ENCODE measurements at regions of chr6 and their contacts with region 1.

Region 1: GRCh38 chr6:29964887-29965562 is 22.7 kb downstream of the HLA-A start:
- DNase-seq: peak; percentile 89
- ATAC-seq: peak; percentile 93
- H3K4me3 ChIP-seq: peak overlapping the region in 4 of 5 experiments; percentile 38 to 65 (median 46)
- H3K4me3 Mint-ChIP-seq: peak overlapping the region; percentile 86
- H3K27ac ChIP-seq: peak overlapping the region; percentile 47 to 66
- H3K27ac Mint-ChIP-seq: peak overlapping the region; percentile 90
- H3K4me1 ChIP-seq: peaks cover 25 to 30% of the 10 kb centered on the region in 2 donors
- H3K4me1 Mint-ChIP-seq: peaks cover 41% of the 10 kb centered on the region
- H3K27me3 ChIP-seq: no peaks in the 10 kb centered on the region
- H3K27me3 Mint-ChIP-seq: no peaks in the 10 kb centered on the region
- CTCF ChIP-seq: no peak

Region 2: GRCh38 chr6:29847871-29848630 is 117.0 kb before region 1 on chr6:
- CTCF ChIA-PET with region 1: interaction called, 91 read pairs
- POLR2A ChIA-PET with region 1: no interaction called
- intact Hi-C with region 1: loop called (anchors 1 kb)
- DNase-seq: peak; percentile 85
- ATAC-seq: peak; percentile 85
- H3K4me3 ChIP-seq: no peak overlapping the region
- H3K4me3 Mint-ChIP-seq: no peak overlapping the region
- H3K27ac ChIP-seq: no peak overlapping the region
- H3K27ac Mint-ChIP-seq: no peak overlapping the region
- H3K4me1 ChIP-seq: peaks cover 6 to 11% of the 10 kb centered on the region in 2 donors
- H3K4me1 Mint-ChIP-seq: peaks cover 9% of the 10 kb centered on the region
- H3K27me3 ChIP-seq: peaks cover 0 to 63% (median 45%) of the 10 kb centered on the region in 4 experiments
- H3K27me3 Mint-ChIP-seq: peaks cover 66% of the 10 kb centered on the region
- CTCF ChIP-seq: peak; percentile 92

Region 3: GRCh38 chr6:29942275-29943052 is 22.6 kb before region 1 on chr6 and contains the start of gene HLA-A:
- CTCF ChIA-PET with region 1: interaction called, 6 read pairs
- POLR2A ChIA-PET with region 1: interaction called, 13 read pairs
- intact Hi-C with region 1: loop called (anchors 1 kb)
- DNase-seq: peak; percentile 97
- ATAC-seq: peak; percentile 90
- H3K4me3 ChIP-seq: peak within 1 kb of the TSS; percentile 63 to 97 (median 90)
- H3K4me3 Mint-ChIP-seq: peak within 1 kb of the TSS; percentile 99
- H3K27ac ChIP-seq: peak within 1 kb of the TSS; percentile 100
- H3K27ac Mint-ChIP-seq: peak within 1 kb of the TSS; percentile 100
- H3K4me1 ChIP-seq: peaks cover 39 to 50% of the 10 kb centered on the region in 2 donors
- H3K4me1 Mint-ChIP-seq: peaks cover 62% of the 10 kb centered on the region
- H3K27me3 ChIP-seq: no peaks in the 10 kb centered on the region
- H3K27me3 Mint-ChIP-seq: no peaks in the 10 kb centered on the region
- CTCF ChIP-seq: no peak
- total RNA-seq, gene HLA-A: 1,591 and 1,607 TPM in 2 replicates

Region 4: GRCh38 chr6:30006170-30007131 is 41.4 kb after region 1 on chr6:
- CTCF ChIA-PET with region 1: interaction called, 3 read pairs
- POLR2A ChIA-PET with region 1: no interaction called
- intact Hi-C with region 1: loop called (anchors 5 kb)
- DNase-seq: peak; percentile 53
- ATAC-seq: peak; percentile 51
- H3K4me3 ChIP-seq: peak overlapping the region; percentile 15 to 69 (median 59)
- H3K4me3 Mint-ChIP-seq: peak overlapping the region; percentile 82
- H3K27ac ChIP-seq: peak overlapping the region in 1 of 2 donors; percentile 49
- H3K27ac Mint-ChIP-seq: no peak overlapping the region
- H3K4me1 ChIP-seq: peaks cover 19 to 20% of the 10 kb centered on the region in 2 donors
- H3K4me1 Mint-ChIP-seq: peaks cover 18% of the 10 kb centered on the region
- H3K27me3 ChIP-seq: peaks cover 0 to 37% (median 20%) of the 10 kb centered on the region in 4 experiments
- H3K27me3 Mint-ChIP-seq: peaks cover 21% of the 10 kb centered on the region
- CTCF ChIP-seq: no peak

Region 5: DNA sequence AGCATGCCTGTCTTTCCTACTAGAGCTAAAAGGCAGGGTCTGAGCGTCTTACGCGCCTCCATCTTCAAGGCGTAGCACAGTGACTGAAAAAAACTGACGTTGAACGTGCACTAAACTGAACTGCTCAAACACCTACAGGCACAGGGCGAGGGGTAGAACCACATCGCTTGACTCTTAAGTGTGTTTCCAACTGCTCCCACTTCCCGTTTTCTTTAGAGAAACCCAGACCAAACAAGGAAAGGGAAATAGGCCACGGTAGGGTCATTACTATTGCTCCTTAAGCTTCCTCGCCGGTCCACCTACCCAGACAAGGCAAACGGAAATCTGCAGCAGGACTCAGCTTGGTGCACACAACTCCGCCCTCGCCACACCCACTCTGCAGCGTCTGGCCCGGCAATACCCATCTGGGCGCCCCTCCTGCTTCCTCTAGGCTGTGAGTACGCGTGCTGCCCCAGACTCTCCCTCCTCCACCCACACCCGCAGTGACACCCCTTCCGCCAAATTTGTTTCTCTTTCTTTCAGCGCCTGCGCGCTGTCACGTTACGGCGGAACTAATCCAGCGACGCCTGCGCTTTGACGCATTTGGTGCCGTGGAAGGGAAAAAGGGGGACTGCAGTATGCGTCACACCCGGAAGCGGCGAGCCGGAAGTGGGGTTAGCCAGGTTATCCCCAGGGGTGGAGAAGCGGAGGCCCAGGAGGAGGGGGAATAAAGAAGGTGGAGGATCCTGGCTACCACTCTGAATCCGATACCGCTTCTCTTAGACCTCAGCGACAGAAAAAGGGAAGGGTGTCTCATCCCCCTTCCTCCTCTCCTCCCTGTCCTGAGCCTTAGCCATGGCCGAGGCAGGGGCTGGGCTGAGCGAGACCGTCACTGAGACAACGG is 101.8 kb after region 1 on chr6 and contains the start of gene PPP1R11:
- CTCF ChIA-PET with region 1: no interaction called
- POLR2A ChIA-PET with region 1: interaction called, 4 read pairs
- intact Hi-C with region 1: loop called (anchors 2 kb)
- DNase-seq: peak; percentile 100
- ATAC-seq: peak; percentile 97
- H3K4me3 ChIP-seq: peak within 1 kb of the TSS; percentile 80 to 95 (median 85)
- H3K4me3 Mint-ChIP-seq: peak within 1 kb of the TSS; percentile 93
- H3K27ac ChIP-seq: peak within 1 kb of the TSS; percentile 93 to 97
- H3K27ac Mint-ChIP-seq: peak within 1 kb of the TSS; percentile 99
- H3K4me1 ChIP-seq: peaks cover 42 to 45% of the 10 kb centered on the region in 2 donors
- H3K4me1 Mint-ChIP-seq: peaks cover 51% of the 10 kb centered on the region
- H3K27me3 ChIP-seq: peaks cover 0 to 20% (median 9%) of the 10 kb centered on the region in 4 experiments
- H3K27me3 Mint-ChIP-seq: peaks cover 17% of the 10 kb centered on the region
- CTCF ChIP-seq: no peak
- total RNA-seq, gene PPP1R11: 44.8 and 49.5 TPM in 2 replicates

Measured in B cell (primary cell).